ENCODE measurements at regions of chr10 and their contacts with region 1.

Region 1: GRCh38 chr10:13913897-13914296 is 327.1 kb downstream of the PRPF18 start:
- DNase-seq: no peak
- ATAC-seq: no peak
- H3K4me3 Mint-ChIP-seq: no peak overlapping the region
- H3K27ac Mint-ChIP-seq: no peak overlapping the region
- H3K4me1 Mint-ChIP-seq: peaks cover 11% of the 10 kb centered on the region
- H3K27me3 Mint-ChIP-seq: peaks cover 2% of the 10 kb centered on the region
- CTCF ChIP-seq: no peak

Region 2: GRCh38 chr10:13834581-13835286 is 79.2 kb before region 1 on chr10:
- CTCF ChIA-PET with region 1: no interaction called
- POLR2A ChIA-PET with region 1: no interaction called
- intact Hi-C with region 1: no loop called
- DNase-seq: no peak
- ATAC-seq: no peak
- H3K4me3 Mint-ChIP-seq: no peak overlapping the region
- H3K27ac Mint-ChIP-seq: no peak overlapping the region
- H3K4me1 Mint-ChIP-seq: peaks cover 31% of the 10 kb centered on the region
- H3K27me3 Mint-ChIP-seq: peaks cover 3% of the 10 kb centered on the region
- CTCF ChIP-seq: no peak

Region 3: GRCh38 chr10:13845897-13846296 is 68.0 kb before region 1 on chr10:
- CTCF ChIA-PET with region 1: no interaction called
- POLR2A ChIA-PET with region 1: interaction called, 10 read pairs
- intact Hi-C with region 1: no loop called
- DNase-seq: no peak
- ATAC-seq: no peak
- H3K4me3 Mint-ChIP-seq: no peak overlapping the region
- H3K27ac Mint-ChIP-seq: no peak overlapping the region
- H3K4me1 Mint-ChIP-seq: peaks cover 14% of the 10 kb centered on the region
- H3K27me3 Mint-ChIP-seq: peaks cover 44% of the 10 kb centered on the region
- CTCF ChIP-seq: no peak

Region 4: GRCh38 chr10:13877154-13877909 is 36.6 kb before region 1 on chr10:
- CTCF ChIA-PET with region 1: no interaction called
- POLR2A ChIA-PET with region 1: no interaction called
- intact Hi-C with region 1: loop called (anchors 5 kb)
- DNase-seq: no peak
- ATAC-seq: no peak
- H3K4me3 Mint-ChIP-seq: no peak overlapping the region
- H3K27ac Mint-ChIP-seq: no peak overlapping the region
- H3K4me1 Mint-ChIP-seq: peaks cover 31% of the 10 kb centered on the region
- H3K27me3 Mint-ChIP-seq: no peaks in the 10 kb centered on the region
- CTCF ChIP-seq: no peak